GM12878 (cell line): ENCODE measurements at regions of chr5 and their contacts with region 1.

Region 1: GRCh38 chr5:10452768-10453331 is 11.2 kb downstream of the ROPN1L start:
- DNase-seq: peak; percentile 62
- ATAC-seq: peak; percentile 94
- H3K4me3 ChIP-seq: no peak overlapping the region
- H3K27ac ChIP-seq: no peak overlapping the region
- H3K4me1 ChIP-seq: no peaks in the 10 kb centered on the region
- H3K27me3 ChIP-seq: no peaks in the 10 kb centered on the region; a peak in 1 of 4 replicates
- CTCF ChIP-seq: peak; percentile 70 to 89 (median 81)
- EP300 ChIP-seq: no peak
- POLR2A ChIP-seq: no peak
- RAD21 ChIP-seq: peak; percentile 100

Region 2: GRCh38 chr5:10469253-10470050 is 16.6 kb after region 1 on chr5:
- CTCF ChIA-PET with region 1: no interaction called
- POLR2A ChIA-PET with region 1: no interaction called
- RAD21 ChIA-PET with region 1: no interaction called
- SMC1A ChIA-PET with region 1: no interaction called
- in situ Hi-C with region 1: no loop called
- intact Hi-C with region 1: no loop called
- DNase-seq: no peak
- ATAC-seq: no peak
- H3K4me3 ChIP-seq: no peak overlapping the region
- H3K27ac ChIP-seq: no peak overlapping the region
- H3K4me1 ChIP-seq: peaks cover 5% of the 10 kb centered on the region; the same call in 1 of the 2 replicates
- H3K27me3 ChIP-seq: no peaks in the 10 kb centered on the region; a peak in 1 of 4 replicates
- CTCF ChIP-seq: no peak
- EP300 ChIP-seq: no peak
- POLR2A ChIP-seq: no peak
- RAD21 ChIP-seq: no peak

Region 3: DNA sequence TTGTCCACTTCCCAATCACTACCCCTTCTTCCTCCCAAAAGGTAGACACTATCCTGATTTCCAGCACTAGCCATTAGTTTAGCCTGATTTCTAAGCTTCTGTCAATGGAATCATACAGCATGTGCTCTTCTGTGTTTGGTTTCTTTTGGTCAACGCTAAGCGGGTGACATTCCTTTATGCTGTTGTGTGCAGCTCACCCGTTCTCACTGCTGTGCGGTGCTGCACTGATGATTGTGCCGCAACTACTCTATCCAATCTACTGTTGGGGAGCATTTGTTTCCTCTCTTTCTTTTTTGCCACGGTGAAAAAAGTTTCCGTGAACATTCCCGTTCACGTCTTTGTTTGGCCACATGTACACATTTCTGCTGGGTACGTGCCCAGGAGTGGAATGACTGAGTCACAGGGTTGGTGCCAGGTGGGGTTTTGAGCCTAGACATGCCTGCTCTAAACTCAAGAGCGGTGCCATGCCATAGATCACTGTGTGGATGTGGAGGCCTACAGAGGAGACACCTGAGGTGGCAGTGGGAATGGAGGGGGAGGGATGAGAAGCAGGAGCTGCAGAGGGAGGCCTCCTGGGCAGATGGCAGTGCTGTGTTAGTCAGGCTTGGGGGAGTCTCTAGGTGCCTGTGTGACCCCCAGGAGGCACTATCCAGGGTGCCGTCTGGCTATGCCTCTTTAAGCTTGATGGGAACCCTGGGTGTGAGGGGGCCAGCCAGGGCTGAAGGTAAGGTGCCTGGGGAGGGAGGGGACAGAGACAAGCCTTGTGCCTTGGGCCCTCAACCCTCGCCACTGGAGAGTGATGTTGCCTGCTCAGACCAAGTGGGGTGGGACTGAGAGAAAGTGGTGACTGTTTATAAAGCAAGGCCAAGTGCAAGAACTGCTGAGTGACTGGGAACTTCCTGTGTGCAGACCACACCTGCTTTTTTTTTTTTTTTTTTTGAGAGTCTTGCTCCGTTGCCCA is 99.6 kb after region 1 on chr5:
- CTCF ChIA-PET with region 1: interaction called, 25 read pairs
- POLR2A ChIA-PET with region 1: no interaction called
- RAD21 ChIA-PET with region 1: no interaction called
- SMC1A ChIA-PET with region 1: interaction called, 6 read pairs
- in situ Hi-C with region 1: no loop called
- intact Hi-C with region 1: no loop called
- DNase-seq: no peak
- ATAC-seq: peak; percentile 78
- H3K4me3 ChIP-seq: no peak overlapping the region
- H3K27ac ChIP-seq: no peak overlapping the region
- H3K4me1 ChIP-seq: peaks cover 19% of the 10 kb centered on the region
- H3K27me3 ChIP-seq: no peaks in the 10 kb centered on the region
- CTCF ChIP-seq: no peak
- EP300 ChIP-seq: no peak
- POLR2A ChIP-seq: peak; percentile 53; the same call in 1 of the 2 replicates
- RAD21 ChIP-seq: no peak

Region 4: GRCh38 chr5:10607666-10608073 is 154.8 kb after region 1 on chr5:
- CTCF ChIA-PET with region 1: interaction called, 5 read pairs
- POLR2A ChIA-PET with region 1: no interaction called
- RAD21 ChIA-PET with region 1: interaction called, 6 read pairs
- SMC1A ChIA-PET with region 1: interaction called, 19 read pairs
- in situ Hi-C with region 1: no loop called
- intact Hi-C with region 1: no loop called
- DNase-seq: peak; percentile 63
- ATAC-seq: peak; percentile 73
- H3K4me3 ChIP-seq: peak overlapping the region; percentile 16
- H3K27ac ChIP-seq: peak overlapping the region; percentile 87
- H3K4me1 ChIP-seq: peaks cover 56% of the 10 kb centered on the region
- H3K27me3 ChIP-seq: no peaks in the 10 kb centered on the region
- CTCF ChIP-seq: peak; percentile 32 to 52 (median 32); a peak in 4 of 6 replicates
- EP300 ChIP-seq: peak; percentile 58 to 63; a peak in 2 of 4 replicates
- POLR2A ChIP-seq: no peak
- RAD21 ChIP-seq: peak; percentile 51

Region 5: DNA sequence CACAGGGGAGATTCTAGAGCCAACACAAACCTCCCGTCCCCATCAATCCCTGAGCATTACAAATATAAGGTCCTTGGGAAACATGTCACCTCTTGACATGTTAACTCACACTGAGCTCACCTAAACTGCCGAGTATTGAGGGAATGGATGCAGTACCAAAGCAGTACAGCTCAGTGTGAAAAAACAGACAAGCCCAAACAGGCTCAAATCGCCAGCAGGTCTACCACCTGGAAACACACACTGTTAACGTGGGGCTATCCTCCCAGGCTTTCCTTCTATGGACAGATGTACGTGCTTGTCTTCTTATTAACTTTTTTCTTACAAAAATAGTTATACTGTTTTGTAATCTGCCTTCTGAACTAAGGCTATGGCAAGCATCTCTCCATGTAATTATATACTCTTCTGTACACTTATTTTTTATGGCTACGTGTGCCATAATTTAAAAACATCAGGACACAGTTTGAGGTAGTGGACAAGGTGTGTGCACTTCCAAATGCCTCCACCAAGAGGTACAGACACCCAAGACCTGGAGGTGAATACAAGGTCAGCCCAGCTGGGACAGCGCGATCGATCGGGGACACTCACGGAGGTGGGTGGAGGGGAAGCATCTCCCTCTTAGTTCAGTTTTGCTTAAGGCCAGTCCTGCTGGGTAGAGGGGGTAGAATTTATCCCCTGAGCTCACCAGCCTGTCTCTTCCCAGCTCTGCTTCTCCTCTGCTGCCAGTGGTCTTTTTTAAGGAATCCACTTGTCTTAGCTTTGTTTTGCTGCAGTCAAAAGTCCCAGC is 231.6 kb after region 1 on chr5:
- CTCF ChIA-PET with region 1: interaction called, 111 read pairs
- POLR2A ChIA-PET with region 1: interaction called, 3 read pairs
- RAD21 ChIA-PET with region 1: interaction called, 44 read pairs
- SMC1A ChIA-PET with region 1: interaction called, 35 read pairs
- in situ Hi-C with region 1: loop called (anchors 5 kb)
- intact Hi-C with region 1: loop called (anchors 1 kb)
- DNase-seq: no peak
- ATAC-seq: peak; percentile 76
- H3K4me3 ChIP-seq: 0 out of 2 replicates have a peak overlapping the region, but pooled peaks have one; percentile 17
- H3K27ac ChIP-seq: peak overlapping the region; percentile 88
- H3K4me1 ChIP-seq: peaks cover 23% of the 10 kb centered on the region
- H3K27me3 ChIP-seq: no peaks in the 10 kb centered on the region
- CTCF ChIP-seq: no peak
- EP300 ChIP-seq: no peak
- POLR2A ChIP-seq: no peak
- RAD21 ChIP-seq: no peak

Region 6: DNA sequence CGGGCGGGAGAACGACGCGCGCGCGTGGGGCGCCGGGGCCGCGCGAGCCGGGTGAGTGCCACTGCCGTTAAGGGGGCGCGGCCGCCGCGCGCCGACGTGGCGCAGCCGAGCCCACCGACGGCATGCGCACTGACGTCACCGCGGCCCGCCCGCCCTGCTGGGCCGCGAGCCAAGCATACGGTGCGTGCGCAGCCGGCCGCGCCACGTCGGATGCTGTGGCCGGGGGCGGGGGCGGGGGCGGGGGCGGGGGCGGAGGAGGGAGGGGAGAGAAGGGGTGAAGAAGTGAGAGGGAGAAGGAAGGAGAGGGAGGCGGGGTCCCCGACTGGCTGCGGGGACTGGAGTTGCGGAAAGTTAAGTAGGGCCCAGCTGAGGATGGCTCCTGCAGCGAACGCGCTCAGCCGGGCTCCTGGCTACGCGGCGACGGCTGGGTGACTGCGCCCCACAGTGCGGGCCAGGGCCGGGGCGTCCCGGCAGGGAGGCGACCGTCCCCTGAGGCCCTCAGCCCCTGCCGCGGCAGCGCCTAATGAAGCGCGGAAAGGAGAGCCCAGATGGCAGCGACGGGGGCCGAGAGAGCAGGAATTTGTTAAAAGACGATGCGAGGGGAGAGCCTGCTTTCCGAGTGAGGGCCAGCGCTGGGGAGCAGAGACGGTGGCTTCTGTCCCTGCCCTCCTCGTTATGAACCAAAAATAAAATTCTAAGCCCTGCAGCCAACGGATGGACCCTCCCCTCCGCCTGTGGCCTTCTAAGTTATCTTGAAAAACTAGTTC is 308.5 kb after region 1 on chr5 and contains the start of gene DAP:
- CTCF ChIA-PET with region 1: no interaction called
- POLR2A ChIA-PET with region 1: no interaction called
- RAD21 ChIA-PET with region 1: no interaction called
- SMC1A ChIA-PET with region 1: no interaction called
- in situ Hi-C with region 1: no loop called
- intact Hi-C with region 1: loop called (anchors 10 kb)
- DNase-seq: peak; percentile 63
- ATAC-seq: peak; percentile 71
- H3K4me3 ChIP-seq: peak within 1 kb of the TSS; percentile 91
- H3K27ac ChIP-seq: peak within 1 kb of the TSS; percentile 82
- H3K4me1 ChIP-seq: peaks cover 13% of the 10 kb centered on the region
- H3K27me3 ChIP-seq: no peaks in the 10 kb centered on the region
- CTCF ChIP-seq: no peak
- EP300 ChIP-seq: no peak
- POLR2A ChIP-seq: peak; percentile 87
- RAD21 ChIP-seq: no peak
- polyA plus RNA-seq, gene DAP: 12.9 to 18.1 TPM

Region 7: GRCh38 chr5:10987930-10988504 is 535.2 kb after region 1 on chr5:
- CTCF ChIA-PET with region 1: no interaction called
- POLR2A ChIA-PET with region 1: no interaction called
- RAD21 ChIA-PET with region 1: no interaction called
- SMC1A ChIA-PET with region 1: no interaction called
- in situ Hi-C with region 1: no loop called
- intact Hi-C with region 1: loop called (anchors 2 kb)
- DNase-seq: no peak
- ATAC-seq: peak; percentile 90
- H3K4me3 ChIP-seq: no peak overlapping the region
- H3K27ac ChIP-seq: no peak overlapping the region
- H3K4me1 ChIP-seq: no peaks in the 10 kb centered on the region
- H3K27me3 ChIP-seq: peaks cover 0 to 2% of the 10 kb centered on the region in 2 experiments; a peak in 2 of 4 replicates
- CTCF ChIP-seq: peak; percentile 86 to 89 (median 88)
- EP300 ChIP-seq: no peak
- POLR2A ChIP-seq: no peak
- RAD21 ChIP-seq: peak; percentile 85

Region 8: DNA sequence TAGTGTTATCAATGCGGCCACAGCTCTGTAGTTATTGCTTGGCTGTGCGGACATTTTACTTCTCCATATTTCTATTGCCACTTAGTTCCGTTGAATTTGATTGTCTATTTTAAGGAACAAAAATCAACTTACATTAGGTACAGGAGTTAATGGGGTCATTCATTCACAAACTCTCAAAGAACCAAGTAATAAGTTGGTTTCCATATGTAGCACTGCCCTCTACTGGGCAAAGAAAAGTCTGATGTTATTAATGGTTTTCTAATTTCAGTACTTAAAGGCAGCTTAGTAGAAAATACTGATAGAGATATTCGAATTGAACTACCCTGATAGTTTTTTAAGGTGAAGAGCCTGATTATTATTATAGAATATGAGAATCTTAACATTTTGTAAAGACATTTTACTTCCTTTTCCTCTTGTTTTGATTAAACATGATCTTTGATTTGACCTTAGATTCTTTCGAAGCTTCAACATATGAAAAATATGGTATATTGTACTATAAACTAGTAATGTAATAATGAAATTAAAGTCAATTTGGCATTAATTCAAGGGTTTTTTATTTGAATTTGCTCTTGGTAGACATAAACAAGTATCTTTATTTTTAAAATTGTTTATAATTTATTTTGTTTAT is 1570.9 kb after region 1 on chr5:
- CTCF ChIA-PET with region 1: interaction called, 6 read pairs
- POLR2A ChIA-PET with region 1: no interaction called
- RAD21 ChIA-PET with region 1: no interaction called
- SMC1A ChIA-PET with region 1: no interaction called
- in situ Hi-C with region 1: loop called (anchors 25 kb)
- intact Hi-C with region 1: no loop called
- DNase-seq: peak; percentile 1
- ATAC-seq: peak; percentile 54; the same call in 2 of the 3 replicates
- H3K4me3 ChIP-seq: no peak overlapping the region
- H3K27ac ChIP-seq: no peak overlapping the region
- H3K4me1 ChIP-seq: no peaks in the 10 kb centered on the region
- H3K27me3 ChIP-seq: no peaks in the 10 kb centered on the region
- CTCF ChIP-seq: peak; percentile 45 to 48 (median 47); a peak in 5 of 6 replicates
- EP300 ChIP-seq: no peak
- POLR2A ChIP-seq: no peak
- RAD21 ChIP-seq: peak; percentile 61